B cell (primary cell): ENCODE measurements at regions of chr2 and their contacts with region 1.

Region 1: GRCh38 chr2:164841719-164842623 is at the start of gene COBLL1:
- DNase-seq: peak; percentile 82
- ATAC-seq: peak; percentile 68
- H3K4me3 ChIP-seq: peak within 1 kb of the TSS; percentile 63 to 97 (median 89)
- H3K4me3 Mint-ChIP-seq: peak within 1 kb of the TSS; percentile 98
- H3K27ac ChIP-seq: peak within 1 kb of the TSS; percentile 74 to 83
- H3K27ac Mint-ChIP-seq: peak within 1 kb of the TSS; percentile 97
- H3K4me1 ChIP-seq: peaks cover 13 to 15% of the 10 kb centered on the region in 2 donors
- H3K4me1 Mint-ChIP-seq: peaks cover 37% of the 10 kb centered on the region
- H3K27me3 ChIP-seq: no peaks in the 10 kb centered on the region
- H3K27me3 Mint-ChIP-seq: no peaks in the 10 kb centered on the region
- CTCF ChIP-seq: peak; percentile 77
- total RNA-seq, gene COBLL1: 234 TPM in 2 replicates

Region 2: DNA sequence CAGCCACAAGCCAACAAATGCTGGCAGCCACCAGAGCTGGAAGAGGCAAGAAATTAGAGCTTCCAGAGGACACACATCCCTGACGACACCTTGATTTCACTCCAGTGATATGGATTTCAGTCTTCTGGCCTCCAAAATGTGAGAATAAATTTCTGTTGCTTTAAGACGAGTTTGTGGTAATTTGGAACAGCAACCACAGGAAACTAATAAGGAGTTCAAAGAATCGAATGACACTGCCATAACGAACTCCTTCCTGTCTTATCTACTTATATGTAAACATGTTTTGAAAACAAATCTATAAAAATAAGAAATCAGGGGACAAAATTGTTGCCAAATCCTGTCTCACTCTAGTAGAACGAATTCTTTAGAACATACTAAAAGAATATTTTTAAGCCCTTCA is 296.5 kb before region 1 on chr2:
- CTCF ChIA-PET with region 1: no interaction called
- POLR2A ChIA-PET with region 1: no interaction called
- intact Hi-C with region 1: no loop called
- DNase-seq: no peak
- ATAC-seq: no peak
- H3K4me3 ChIP-seq: no peak overlapping the region
- H3K4me3 Mint-ChIP-seq: no peak overlapping the region
- H3K27ac ChIP-seq: no peak overlapping the region
- H3K27ac Mint-ChIP-seq: no peak overlapping the region
- H3K4me1 ChIP-seq: no peaks in the 10 kb centered on the region
- H3K4me1 Mint-ChIP-seq: no peaks in the 10 kb centered on the region
- H3K27me3 ChIP-seq: no peaks in the 10 kb centered on the region
- H3K27me3 Mint-ChIP-seq: peaks cover 3% of the 10 kb centered on the region
- CTCF ChIP-seq: no peak

Region 3: DNA sequence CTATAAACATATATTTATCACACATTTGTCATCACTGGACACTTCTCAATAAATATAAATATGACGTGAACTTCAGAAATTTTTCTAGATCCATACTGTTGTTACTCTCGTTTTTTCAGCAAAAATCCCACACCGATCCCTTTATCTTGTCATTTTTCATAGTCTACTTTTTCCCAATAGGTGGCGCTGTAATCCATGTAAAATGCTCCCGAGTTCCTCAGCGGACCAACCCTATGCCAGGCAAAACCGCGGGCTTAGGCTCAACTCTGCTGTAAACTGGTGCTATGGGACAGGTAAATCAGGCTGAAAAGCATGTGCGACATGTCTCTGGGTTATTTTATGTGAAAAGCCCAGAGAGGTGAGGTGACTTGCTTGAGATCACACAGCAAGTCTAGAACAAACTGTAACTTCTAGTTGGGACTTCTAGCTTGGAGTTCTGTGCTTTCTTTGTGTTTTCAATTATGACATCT is 104.3 kb before region 1 on chr2:
- CTCF ChIA-PET with region 1: interaction called, 49 read pairs
- POLR2A ChIA-PET with region 1: interaction called, 9 read pairs
- intact Hi-C with region 1: loop called (anchors 1 kb)
- DNase-seq: peak; percentile 86
- ATAC-seq: peak; percentile 68
- H3K4me3 ChIP-seq: peak overlapping the region in 1 of 5 experiments; percentile 1
- H3K4me3 Mint-ChIP-seq: peak overlapping the region; percentile 16
- H3K27ac ChIP-seq: no peak overlapping the region
- H3K27ac Mint-ChIP-seq: peak overlapping the region; percentile 16
- H3K4me1 ChIP-seq: peaks cover 24 to 40% of the 10 kb centered on the region in 2 donors
- H3K4me1 Mint-ChIP-seq: peaks cover 63% of the 10 kb centered on the region
- H3K27me3 ChIP-seq: no peaks in the 10 kb centered on the region
- H3K27me3 Mint-ChIP-seq: no peaks in the 10 kb centered on the region
- CTCF ChIP-seq: peak; percentile 91

Region 4: GRCh38 chr2:164803776-164804466 is 38.0 kb before region 1 on chr2:
- CTCF ChIA-PET with region 1: interaction called, 4 read pairs
- POLR2A ChIA-PET with region 1: interaction called, 4 read pairs
- intact Hi-C with region 1: loop called (anchors 5 kb)
- DNase-seq: no peak
- ATAC-seq: no peak
- H3K4me3 ChIP-seq: no peak overlapping the region
- H3K4me3 Mint-ChIP-seq: peak overlapping the region; percentile 55
- H3K27ac ChIP-seq: peak overlapping the region in 1 of 2 donors; percentile 21
- H3K27ac Mint-ChIP-seq: peak overlapping the region; percentile 15
- H3K4me1 ChIP-seq: peaks cover 3 to 15% of the 10 kb centered on the region in 2 donors
- H3K4me1 Mint-ChIP-seq: peaks cover 25% of the 10 kb centered on the region
- H3K27me3 ChIP-seq: no peaks in the 10 kb centered on the region
- H3K27me3 Mint-ChIP-seq: no peaks in the 10 kb centered on the region
- CTCF ChIP-seq: no peak

Region 5: DNA sequence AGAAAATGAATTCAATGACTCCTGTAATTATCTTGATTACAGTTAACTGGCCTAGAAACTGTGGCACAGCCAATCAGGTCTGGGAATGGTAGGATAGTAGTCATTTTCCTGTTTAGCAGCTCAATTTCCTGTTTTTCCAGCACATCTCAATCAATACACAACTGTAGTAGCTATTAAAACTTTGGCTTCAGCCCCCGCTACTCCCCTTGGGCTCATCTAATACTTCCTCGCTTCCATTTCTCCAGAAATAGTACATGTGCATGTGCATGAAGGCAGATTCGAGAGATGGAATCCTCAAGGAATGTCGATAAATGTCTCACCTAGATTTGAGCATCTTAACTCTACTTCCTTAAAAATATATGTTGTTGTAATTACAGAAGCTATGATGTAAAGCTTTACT is 10.1 kb before region 1 on chr2:
- CTCF ChIA-PET with region 1: interaction called, 10 read pairs
- POLR2A ChIA-PET with region 1: interaction called, 3 read pairs
- intact Hi-C with region 1: loop called (anchors 2 kb)
- DNase-seq: no peak
- ATAC-seq: no peak
- H3K4me3 ChIP-seq: no peak overlapping the region
- H3K4me3 Mint-ChIP-seq: no peak overlapping the region
- H3K27ac ChIP-seq: no peak overlapping the region
- H3K27ac Mint-ChIP-seq: peak overlapping the region; percentile 32
- H3K4me1 ChIP-seq: peaks cover 7 to 27% of the 10 kb centered on the region in 2 donors
- H3K4me1 Mint-ChIP-seq: peaks cover 44% of the 10 kb centered on the region
- H3K27me3 ChIP-seq: no peaks in the 10 kb centered on the region
- H3K27me3 Mint-ChIP-seq: no peaks in the 10 kb centered on the region
- CTCF ChIP-seq: no peak

Region 6: DNA sequence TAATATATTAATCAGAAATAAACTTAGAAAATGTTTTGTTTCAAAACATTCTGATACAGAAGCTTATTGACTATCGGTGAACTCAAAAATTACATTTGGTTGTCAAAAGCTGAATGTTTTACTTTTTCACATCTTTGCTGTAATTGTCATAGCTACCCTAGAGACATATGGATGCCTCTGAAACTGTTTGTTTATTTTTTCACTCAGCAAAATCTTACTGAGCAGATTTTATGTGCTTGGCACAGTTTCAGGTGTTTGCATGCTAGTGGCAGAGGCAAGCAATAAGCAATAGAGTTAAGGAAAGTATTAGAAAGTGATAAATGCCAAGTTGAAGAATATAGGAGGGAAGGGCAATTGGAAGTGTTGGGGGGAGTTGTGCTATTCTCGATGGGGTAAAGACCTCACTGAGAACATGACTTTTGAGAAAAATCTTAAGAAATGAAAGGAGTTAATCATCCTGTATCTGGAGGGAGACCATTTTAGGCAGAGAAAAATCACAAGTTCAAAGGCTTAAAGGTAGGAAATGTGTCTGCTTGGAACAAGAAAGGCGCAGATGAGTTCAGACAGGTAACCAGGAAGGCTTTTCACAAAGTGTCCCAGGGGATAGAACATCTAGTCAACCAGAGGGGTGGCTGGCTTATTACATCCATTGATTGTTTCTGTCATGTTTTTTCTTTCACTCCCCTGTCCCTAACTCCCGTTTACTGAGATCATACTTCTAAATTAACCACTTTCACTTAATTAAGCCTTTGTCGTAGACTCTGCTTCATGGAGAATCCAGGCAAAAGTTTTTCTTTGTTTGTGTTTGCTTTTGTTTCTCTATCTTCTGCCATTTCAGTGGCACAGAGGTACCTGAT is 26.8 kb after region 1 on chr2:
- CTCF ChIA-PET with region 1: interaction called, 15 read pairs
- POLR2A ChIA-PET with region 1: interaction called, 8 read pairs
- intact Hi-C with region 1: loop called (anchors 1 kb)
- DNase-seq: no peak
- ATAC-seq: no peak
- H3K4me3 ChIP-seq: no peak overlapping the region
- H3K4me3 Mint-ChIP-seq: no peak overlapping the region
- H3K27ac ChIP-seq: peak overlapping the region in 1 of 2 donors; percentile 11
- H3K27ac Mint-ChIP-seq: peak overlapping the region; percentile 54
- H3K4me1 ChIP-seq: peaks cover 27 to 35% of the 10 kb centered on the region in 2 donors
- H3K4me1 Mint-ChIP-seq: peaks cover 36% of the 10 kb centered on the region
- H3K27me3 ChIP-seq: no peaks in the 10 kb centered on the region
- H3K27me3 Mint-ChIP-seq: no peaks in the 10 kb centered on the region
- CTCF ChIP-seq: no peak

Region 7: DNA sequence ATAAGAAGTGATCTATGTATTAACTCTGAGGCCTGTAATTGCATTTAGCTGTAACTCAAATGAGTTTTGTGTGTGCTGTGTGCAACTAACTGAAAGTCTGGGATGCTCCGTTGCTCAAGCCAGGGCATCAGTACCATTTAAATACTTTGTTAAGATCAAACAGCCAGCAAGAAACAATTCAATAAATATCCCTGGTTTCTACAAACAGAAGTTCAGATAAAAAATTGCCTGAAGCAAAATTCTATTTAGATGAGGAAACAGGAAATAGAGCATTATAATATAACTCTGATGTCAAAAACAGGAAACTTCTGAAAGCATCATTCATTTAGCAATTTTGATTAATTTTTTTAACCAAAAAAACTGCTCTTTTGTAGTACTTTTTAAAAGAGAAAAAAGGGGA is 132.2 kb after region 1 on chr2:
- CTCF ChIA-PET with region 1: interaction called, 4 read pairs
- POLR2A ChIA-PET with region 1: no interaction called
- intact Hi-C with region 1: loop called (anchors 10 kb)
- DNase-seq: no peak
- ATAC-seq: no peak
- H3K4me3 ChIP-seq: no peak overlapping the region
- H3K4me3 Mint-ChIP-seq: peak overlapping the region; percentile 33
- H3K27ac ChIP-seq: peak overlapping the region; percentile 21 to 79
- H3K27ac Mint-ChIP-seq: peak overlapping the region; percentile 46
- H3K4me1 ChIP-seq: peaks cover 73 to 84% of the 10 kb centered on the region in 2 donors
- H3K4me1 Mint-ChIP-seq: peaks cover 80% of the 10 kb centered on the region
- H3K27me3 ChIP-seq: no peaks in the 10 kb centered on the region
- H3K27me3 Mint-ChIP-seq: no peaks in the 10 kb centered on the region
- CTCF ChIP-seq: no peak